ENCODE measurements at regions of chr4 and their contacts with region 1.

Region 1: DNA sequence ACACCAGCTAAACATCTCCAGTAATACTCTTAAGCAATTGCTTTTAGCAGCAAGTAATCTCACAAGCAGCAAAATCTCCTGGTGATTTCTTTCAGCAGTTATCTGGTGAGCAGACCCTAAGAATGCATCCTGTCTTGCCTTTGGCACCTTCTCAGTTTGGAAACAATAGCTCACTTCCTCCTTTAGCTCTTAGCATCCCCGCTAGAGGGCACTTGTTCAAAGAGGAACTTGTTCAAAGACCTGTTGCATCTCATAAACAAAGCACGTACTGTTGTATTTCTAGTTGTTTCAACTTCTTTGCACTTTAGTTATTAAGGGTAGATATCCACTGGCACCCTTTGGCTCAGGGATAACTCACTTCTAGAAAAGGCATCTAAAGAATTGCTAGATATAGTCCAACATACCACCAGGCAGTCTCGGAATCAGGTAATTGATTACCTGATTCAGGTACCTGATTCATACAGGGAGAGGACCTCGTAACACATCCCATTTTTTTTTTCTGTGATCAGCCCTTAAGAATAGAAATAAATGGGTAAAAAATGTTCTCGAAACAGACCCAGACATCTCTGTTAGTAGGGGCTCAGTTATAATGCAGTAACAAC is 81.9 kb upstream of the QRFPR start:
- DNase-seq: peak; percentile 10
- H3K4me3 ChIP-seq: no peak overlapping the region; a peak in 1 of 4 replicates
- H3K27ac ChIP-seq: no peak overlapping the region
- H3K4me1 ChIP-seq: no peaks in the 10 kb centered on the region
- H3K27me3 ChIP-seq: peaks cover 14% of the 10 kb centered on the region; the same call in 1 of the 2 replicates
- CTCF ChIP-seq: peak; percentile 79
- EP300 ChIP-seq: no peak
- RAD21 ChIP-seq: peak; percentile 64

Region 2: GRCh38 chr4:121472937-121473721 is 10.4 kb after region 1 on chr4:
- CTCF ChIA-PET with region 1: interaction called, 10 read pairs
- POLR2A ChIA-PET with region 1: no interaction called
- DNase-seq: no peak
- H3K4me3 ChIP-seq: no peak overlapping the region
- H3K27ac ChIP-seq: no peak overlapping the region
- H3K4me1 ChIP-seq: no peaks in the 10 kb centered on the region
- H3K27me3 ChIP-seq: no peaks in the 10 kb centered on the region
- CTCF ChIP-seq: no peak
- EP300 ChIP-seq: no peak
- RAD21 ChIP-seq: no peak

Region 3: GRCh38 chr4:121656269-121656641 is 193.5 kb after region 1 on chr4:
- CTCF ChIA-PET with region 1: interaction called, 16 read pairs
- POLR2A ChIA-PET with region 1: no interaction called
- DNase-seq: peak; percentile 33
- H3K4me3 ChIP-seq: no peak overlapping the region; a peak in 1 of 4 replicates
- H3K27ac ChIP-seq: no peak overlapping the region; a peak in 1 of 4 replicates
- H3K4me1 ChIP-seq: no peaks in the 10 kb centered on the region; a peak in 1 of 4 replicates
- H3K27me3 ChIP-seq: no peaks in the 10 kb centered on the region
- CTCF ChIP-seq: peak; percentile 70
- EP300 ChIP-seq: no peak
- RAD21 ChIP-seq: peak; percentile 72

Region 4: DNA sequence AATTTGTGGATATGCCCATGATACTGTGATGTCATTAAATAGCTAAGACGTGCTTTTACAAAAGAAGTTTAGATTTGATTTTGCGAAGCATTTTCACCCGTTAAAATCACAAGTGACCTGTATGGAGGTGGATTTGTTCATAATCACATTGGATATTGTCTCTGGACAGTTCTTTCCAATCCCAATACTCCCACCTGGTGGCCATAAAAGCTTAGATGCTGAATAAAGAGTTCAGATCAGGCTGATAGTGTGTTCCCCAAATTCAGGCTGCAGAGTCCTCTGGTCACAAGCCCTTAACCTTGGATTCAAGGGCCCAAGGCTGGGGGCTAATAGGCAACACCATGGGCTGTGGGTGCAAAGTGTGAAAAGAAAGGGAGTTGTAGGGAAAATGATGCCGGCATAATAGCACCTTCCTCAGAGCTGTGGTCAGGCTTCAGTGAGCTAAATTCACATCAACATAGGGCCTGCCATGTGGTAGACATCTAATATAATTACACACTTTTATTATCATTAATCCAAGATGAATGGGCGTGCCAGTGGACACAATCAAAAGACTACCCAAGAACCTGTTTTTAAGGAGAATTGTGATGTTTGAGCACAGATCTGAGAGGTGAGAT is 274.1 kb after region 1 on chr4:
- CTCF ChIA-PET with region 1: interaction called, 22 read pairs
- POLR2A ChIA-PET with region 1: no interaction called
- DNase-seq: peak; percentile 45
- H3K4me3 ChIP-seq: no peak overlapping the region
- H3K27ac ChIP-seq: no peak overlapping the region
- H3K4me1 ChIP-seq: peaks cover 0 to 2% of the 10 kb centered on the region in 2 experiments; a peak in 2 of 4 replicates
- H3K27me3 ChIP-seq: no peaks in the 10 kb centered on the region
- CTCF ChIP-seq: peak; percentile 77
- EP300 ChIP-seq: no peak
- RAD21 ChIP-seq: peak; percentile 76

Region 5: DNA sequence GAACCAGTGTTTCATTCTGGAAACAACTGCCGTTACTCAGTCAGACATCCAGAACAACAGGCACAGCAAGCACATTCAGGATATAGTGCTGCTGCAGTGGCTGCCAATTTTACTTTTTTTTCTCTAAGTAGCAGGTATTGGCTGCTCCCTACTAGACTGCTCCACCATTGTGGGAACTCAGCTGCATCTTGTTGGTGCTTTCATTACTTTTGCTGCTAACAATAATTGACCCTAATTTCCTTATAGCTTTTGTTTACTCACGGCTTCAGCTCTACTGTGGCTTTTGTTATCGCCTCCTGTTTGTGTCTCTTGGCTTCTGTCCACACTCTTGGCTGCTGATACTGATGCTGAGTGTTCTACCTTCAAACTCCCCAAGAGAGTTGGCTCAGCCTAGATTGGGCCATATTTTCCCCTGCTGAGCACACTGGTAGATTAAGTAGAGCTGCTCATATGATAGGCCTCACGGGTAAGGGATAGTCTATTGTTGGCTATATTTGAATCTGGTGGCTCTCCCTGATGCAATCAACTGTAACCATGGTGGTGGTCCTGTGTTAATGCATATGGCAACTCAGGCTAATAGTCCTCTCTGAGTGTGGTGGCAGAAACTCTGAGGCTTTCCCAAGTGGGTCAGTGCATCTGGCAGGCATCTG is 1038.2 kb after region 1 on chr4:
- CTCF ChIA-PET with region 1: no interaction called
- POLR2A ChIA-PET with region 1: no interaction called
- DNase-seq: no peak
- H3K4me3 ChIP-seq: no peak overlapping the region
- H3K27ac ChIP-seq: no peak overlapping the region
- H3K4me1 ChIP-seq: no peaks in the 10 kb centered on the region
- H3K27me3 ChIP-seq: no peaks in the 10 kb centered on the region; the same call in none of the 2 replicates
- CTCF ChIP-seq: no peak
- EP300 ChIP-seq: no peak
- RAD21 ChIP-seq: no peak